ENCODE measurements at regions of chr16 and their contacts with region 1.

Region 1: DNA sequence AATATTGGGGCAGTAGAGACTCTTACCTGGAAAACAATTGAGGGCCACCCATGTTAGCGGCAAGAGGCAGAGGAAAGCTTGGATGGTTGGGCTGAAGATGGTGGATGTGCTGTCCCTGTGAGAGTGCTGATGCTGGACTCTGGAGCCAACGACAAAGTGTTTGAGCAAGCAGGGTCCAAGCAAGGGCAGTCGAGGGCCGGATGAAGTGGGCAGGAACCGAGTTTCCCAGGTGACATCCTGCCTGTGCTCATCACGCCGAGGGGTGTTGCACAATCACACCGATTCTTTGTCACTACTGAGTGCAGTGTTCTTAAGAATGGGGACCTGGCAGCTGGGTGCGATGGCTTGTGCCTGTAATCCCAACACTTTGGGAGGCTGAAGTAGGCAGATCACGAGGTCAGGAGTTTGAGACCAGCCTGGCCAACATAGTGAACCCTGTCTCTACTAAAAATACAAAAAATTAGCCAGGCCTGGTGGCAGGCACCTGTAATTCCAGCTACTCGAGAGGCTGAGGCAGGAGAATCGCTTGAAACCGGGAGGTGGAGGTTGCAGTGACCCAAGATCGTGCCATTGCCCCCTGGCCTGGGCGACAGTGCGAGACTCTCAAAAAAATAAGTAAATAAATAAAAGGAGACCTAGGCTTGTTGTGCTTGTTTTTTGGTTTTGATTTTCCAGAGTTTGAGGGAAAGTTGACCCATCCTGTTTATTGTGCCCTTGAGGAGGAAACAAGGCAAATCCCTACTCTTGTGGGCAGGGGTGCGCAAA is 6.1 kb downstream of the PYCARD start:
- DNase-seq: no peak
- ATAC-seq: no peak
- H3K4me3 Mint-ChIP-seq: no peak overlapping the region
- H3K27ac Mint-ChIP-seq: peak overlapping the region; percentile 44
- H3K4me1 Mint-ChIP-seq: peaks cover 77% of the 10 kb centered on the region
- H3K27me3 Mint-ChIP-seq: no peaks in the 10 kb centered on the region

Region 2: GRCh38 chr16:31186176-31186575 is 10.3 kb before region 1 on chr16:
- CTCF ChIA-PET with region 1: interaction called, 4 read pairs
- POLR2A ChIA-PET with region 1: interaction called, 87 read pairs
- DNase-seq: no peak
- ATAC-seq: no peak
- H3K4me3 Mint-ChIP-seq: peak overlapping the region; percentile 46
- H3K27ac Mint-ChIP-seq: peak overlapping the region; percentile 79
- H3K4me1 Mint-ChIP-seq: peaks cover 88% of the 10 kb centered on the region
- H3K27me3 Mint-ChIP-seq: no peaks in the 10 kb centered on the region

Measured in activated CD8-positive, alpha-beta T cell treated with anti-CD3 and anti-CD28 coated beads, Interleukin-2, amount 10 ng/mL, durations not matched to agents 7 days and 5 days (primary cell).